Common myeloid progenitor, CD34-positive (primary cell): ENCODE measurements at regions of chr14 and their contacts with region 1.

Region 1: DNA sequence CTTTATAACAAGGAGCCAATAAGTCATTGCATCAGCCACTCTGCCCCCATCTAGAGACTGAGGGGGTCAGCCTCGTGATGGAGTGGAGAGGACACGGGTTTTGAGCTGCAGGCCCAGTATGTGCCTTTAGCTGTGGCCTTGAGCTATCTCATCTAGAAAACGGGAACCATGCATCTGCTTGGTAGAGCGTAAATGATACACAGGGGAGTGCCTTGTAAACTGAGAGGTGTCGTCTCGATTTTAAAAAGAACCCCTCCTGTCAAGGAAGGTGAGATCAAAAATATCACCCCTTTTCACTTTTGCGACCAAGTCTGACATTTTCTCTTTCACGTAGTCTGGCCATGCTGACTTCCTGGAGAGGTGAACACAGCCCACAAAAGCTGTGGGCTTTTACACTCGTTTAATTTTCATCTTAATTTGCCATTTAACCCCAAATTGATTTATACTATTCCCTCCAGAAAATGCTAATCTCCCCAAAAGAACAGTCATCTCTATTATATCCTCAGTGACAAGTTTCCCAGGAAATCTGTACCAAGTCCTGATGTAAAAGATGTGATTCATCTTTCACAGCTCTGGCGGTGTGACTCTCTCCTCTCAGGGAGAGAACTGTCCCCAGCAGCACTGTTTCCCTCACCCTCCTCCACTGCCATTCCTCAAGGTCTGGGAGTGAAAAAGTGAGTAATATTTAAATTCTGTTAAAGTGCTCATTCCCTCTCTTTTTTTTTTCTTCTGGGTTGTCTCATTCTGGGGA is 30.6 kb downstream of the VCPKMT start:
- DNase-seq: peak in 1 of 3 donors; percentile 30
- H3K4me3 ChIP-seq: no peak overlapping the region
- H3K27ac ChIP-seq: no peak overlapping the region
- H3K4me1 ChIP-seq: peaks cover 0 to 23% (median 6%) of the 10 kb centered on the region in 4 experiments
- H3K27me3 ChIP-seq: no peaks in the 10 kb centered on the region

Region 2: GRCh38 chr14:50109342-50109741 is 23.6 kb after region 1 on chr14:
- CTCF ChIA-PET with region 1: interaction called, 13 read pairs
- POLR2A ChIA-PET with region 1: no interaction called
- DNase-seq: peak; percentile 17 to 43 (median 39)
- H3K4me3 ChIP-seq: no peak overlapping the region
- H3K27ac ChIP-seq: no peak overlapping the region
- H3K4me1 ChIP-seq: peaks cover 0 to 3% (median 1%) of the 10 kb centered on the region in 4 experiments
- H3K27me3 ChIP-seq: no peaks in the 10 kb centered on the region